SK-N-SH (cell line): ENCODE measurements at regions of chr14 and their contacts with region 1.

Region 1: GRCh38 chr14:69931960-69932359 is 52.7 kb downstream of the SMOC1 start:
- DNase-seq: no peak
- H3K4me3 ChIP-seq: no peak overlapping the region
- H3K27ac ChIP-seq: no peak overlapping the region
- H3K4me1 ChIP-seq: peaks cover 0 to 8% of the 10 kb centered on the region in 2 experiments; a peak in 1 of 4 replicates
- H3K27me3 ChIP-seq: no peaks in the 10 kb centered on the region
- CTCF ChIP-seq: no peak
- EP300 ChIP-seq: no peak
- RAD21 ChIP-seq: no peak

Region 2: GRCh38 chr14:69901113-69901951 is 30.6 kb before region 1 on chr14:
- CTCF ChIA-PET with region 1: no interaction called
- POLR2A ChIA-PET with region 1: no interaction called
- DNase-seq: no peak
- H3K4me3 ChIP-seq: no peak overlapping the region
- H3K27ac ChIP-seq: no peak overlapping the region
- H3K4me1 ChIP-seq: no peaks in the 10 kb centered on the region
- H3K27me3 ChIP-seq: no peaks in the 10 kb centered on the region
- CTCF ChIP-seq: no peak
- EP300 ChIP-seq: no peak
- RAD21 ChIP-seq: no peak

Region 3: DNA sequence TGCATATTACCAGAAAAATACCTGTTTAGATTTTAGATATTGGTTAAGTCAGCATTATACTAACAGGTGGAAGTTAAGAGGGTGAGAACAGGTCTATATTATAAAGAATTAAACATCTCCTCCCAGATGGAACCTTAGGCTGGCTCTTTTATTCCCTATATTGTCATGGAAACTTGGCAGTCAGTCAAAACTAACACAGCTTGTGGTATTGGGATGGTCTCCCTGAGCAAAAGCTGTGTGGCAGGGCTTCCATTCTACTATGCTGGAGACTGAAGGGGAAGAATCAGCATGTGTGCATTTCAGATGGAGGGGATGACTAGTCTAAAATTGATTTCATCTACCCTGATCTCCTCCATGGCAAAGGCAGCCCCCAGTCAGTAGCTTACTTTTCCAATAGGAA is 14.0 kb after region 1 on chr14:
- CTCF ChIA-PET with region 1: interaction called, 13 read pairs
- POLR2A ChIA-PET with region 1: no interaction called
- DNase-seq: no peak
- H3K4me3 ChIP-seq: no peak overlapping the region
- H3K27ac ChIP-seq: no peak overlapping the region
- H3K4me1 ChIP-seq: peaks cover 0 to 44% of the 10 kb centered on the region in 2 experiments; a peak in 2 of 4 replicates
- H3K27me3 ChIP-seq: no peaks in the 10 kb centered on the region
- CTCF ChIP-seq: no peak
- EP300 ChIP-seq: no peak
- RAD21 ChIP-seq: no peak

Region 4: GRCh38 chr14:70045844-70046535 is 114.0 kb after region 1 on chr14:
- CTCF ChIA-PET with region 1: no interaction called
- POLR2A ChIA-PET with region 1: no interaction called
- DNase-seq: peak; percentile 82
- H3K4me3 ChIP-seq: peak overlapping the region in 1 of 2 experiments; percentile 39; a peak in 1 of 4 replicates
- H3K27ac ChIP-seq: peak overlapping the region in 1 of 2 experiments; percentile 40; a peak in 2 of 4 replicates
- H3K4me1 ChIP-seq: peaks cover 0 to 18% of the 10 kb centered on the region in 2 experiments; a peak in 1 of 4 replicates
- H3K27me3 ChIP-seq: no peaks in the 10 kb centered on the region
- CTCF ChIP-seq: peak; percentile 47
- EP300 ChIP-seq: no peak
- RAD21 ChIP-seq: peak; percentile 96